AG04450 (cell line): ENCODE measurements at regions of chr19 and their contacts with region 1.

Region 1: DNA sequence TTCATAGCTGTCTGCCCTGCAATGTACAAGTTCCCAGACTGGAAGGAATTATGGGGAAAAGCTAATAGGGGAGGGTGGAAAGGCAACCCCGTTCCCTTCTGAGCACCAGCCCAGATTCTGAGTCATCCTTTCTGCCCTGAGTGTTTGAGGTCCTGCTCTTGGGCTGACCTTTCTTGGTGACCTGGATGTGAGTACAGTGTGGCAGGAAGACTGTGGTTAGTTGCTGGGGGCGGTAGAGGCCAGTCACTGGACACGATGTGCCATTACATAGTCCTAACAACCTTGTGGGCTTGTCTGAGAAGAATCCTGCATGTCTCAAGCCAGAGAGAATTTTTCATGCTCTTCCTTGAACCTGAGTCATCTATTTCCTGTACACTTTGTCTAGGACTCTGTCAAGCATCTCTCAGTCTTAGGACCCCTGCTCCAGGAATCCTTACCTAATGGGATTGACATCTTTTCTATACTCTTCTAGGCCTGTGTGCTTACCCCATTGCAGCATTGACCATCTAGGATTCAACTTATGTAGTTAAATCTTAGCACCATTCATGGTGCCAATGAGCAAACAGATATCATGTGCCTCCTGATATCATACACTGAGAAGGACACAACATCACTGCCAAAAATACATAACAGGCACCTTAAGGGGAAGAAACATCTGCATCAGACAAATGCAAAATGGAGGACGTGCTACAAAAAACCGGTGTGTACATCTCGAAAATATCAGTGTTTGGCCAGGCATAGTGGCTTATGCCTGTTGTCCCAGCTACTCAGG is 8.1 kb upstream of the ANGPTL4 start:
- DNase-seq: no peak
- H3K4me3 ChIP-seq: no peak overlapping the region
- H3K27ac ChIP-seq: peak overlapping the region; percentile 34
- H3K27me3 ChIP-seq: no peaks in the 10 kb centered on the region
- CTCF ChIP-seq: no peak

Region 2: GRCh38 chr19:8041531-8041931 is 314.3 kb before region 1 on chr19:
- CTCF ChIA-PET with region 1: no interaction called
- POLR2A ChIA-PET with region 1: no interaction called
- DNase-seq: no peak
- H3K4me3 ChIP-seq: no peak overlapping the region
- H3K27ac ChIP-seq: no peak overlapping the region
- H3K27me3 ChIP-seq: peaks cover 6% of the 10 kb centered on the region
- CTCF ChIP-seq: no peak

Region 3: GRCh38 chr19:8310342-8311255 is 45.2 kb before region 1 on chr19:
- CTCF ChIA-PET with region 1: interaction called, 11 read pairs
- POLR2A ChIA-PET with region 1: no interaction called
- DNase-seq: no peak
- H3K4me3 ChIP-seq: no peak overlapping the region
- H3K27ac ChIP-seq: no peak overlapping the region
- H3K27me3 ChIP-seq: no peaks in the 10 kb centered on the region
- CTCF ChIP-seq: no peak

Region 4: DNA sequence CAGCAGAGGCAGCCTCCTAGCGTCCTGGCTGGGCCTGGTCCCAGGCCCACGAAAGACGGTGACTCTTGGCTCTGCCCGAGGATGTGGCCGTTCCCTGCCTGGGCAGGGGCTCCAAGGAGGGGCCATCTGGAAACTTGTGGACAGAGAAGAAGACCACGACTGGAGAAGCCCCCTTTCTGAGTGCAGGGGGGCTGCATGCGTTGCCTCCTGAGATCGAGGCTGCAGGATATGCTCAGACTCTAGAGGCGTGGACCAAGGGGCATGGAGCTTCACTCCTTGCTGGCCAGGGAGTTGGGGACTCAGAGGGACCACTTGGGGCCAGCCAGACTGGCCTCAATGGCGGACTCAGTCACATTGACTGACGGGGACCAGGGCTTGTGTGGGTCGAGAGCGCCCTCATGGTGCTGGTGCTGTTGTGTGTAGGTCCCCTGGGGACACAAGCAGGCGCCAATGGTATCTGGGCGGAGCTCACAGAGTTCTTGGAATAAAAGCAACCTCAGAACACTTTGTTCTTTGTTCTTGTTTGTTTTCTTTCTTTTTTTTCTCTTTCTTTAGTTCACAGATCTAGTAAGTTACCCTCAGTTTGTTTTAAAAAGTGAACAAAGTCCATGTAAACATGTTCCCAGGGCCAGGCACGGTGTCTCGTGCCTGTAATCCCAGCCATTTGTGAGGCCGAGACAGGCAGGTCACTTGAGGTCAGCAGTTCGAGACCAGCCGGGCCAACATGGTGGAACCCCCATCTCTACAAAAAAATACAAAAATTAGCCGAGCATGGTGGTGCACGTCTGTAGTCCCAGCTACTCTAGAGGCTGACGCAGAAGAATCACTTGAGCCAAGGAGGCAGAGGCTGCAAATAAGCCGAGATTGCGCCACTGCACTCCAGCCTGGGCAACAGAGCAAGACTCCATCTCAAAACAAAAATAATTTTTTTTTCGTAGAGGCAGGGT is 18.3 kb after region 1 on chr19:
- CTCF ChIA-PET with region 1: interaction called, 12 read pairs
- POLR2A ChIA-PET with region 1: no interaction called
- DNase-seq: no peak
- H3K4me3 ChIP-seq: no peak overlapping the region
- H3K27ac ChIP-seq: no peak overlapping the region
- H3K27me3 ChIP-seq: no peaks in the 10 kb centered on the region
- CTCF ChIP-seq: no peak

Region 5: DNA sequence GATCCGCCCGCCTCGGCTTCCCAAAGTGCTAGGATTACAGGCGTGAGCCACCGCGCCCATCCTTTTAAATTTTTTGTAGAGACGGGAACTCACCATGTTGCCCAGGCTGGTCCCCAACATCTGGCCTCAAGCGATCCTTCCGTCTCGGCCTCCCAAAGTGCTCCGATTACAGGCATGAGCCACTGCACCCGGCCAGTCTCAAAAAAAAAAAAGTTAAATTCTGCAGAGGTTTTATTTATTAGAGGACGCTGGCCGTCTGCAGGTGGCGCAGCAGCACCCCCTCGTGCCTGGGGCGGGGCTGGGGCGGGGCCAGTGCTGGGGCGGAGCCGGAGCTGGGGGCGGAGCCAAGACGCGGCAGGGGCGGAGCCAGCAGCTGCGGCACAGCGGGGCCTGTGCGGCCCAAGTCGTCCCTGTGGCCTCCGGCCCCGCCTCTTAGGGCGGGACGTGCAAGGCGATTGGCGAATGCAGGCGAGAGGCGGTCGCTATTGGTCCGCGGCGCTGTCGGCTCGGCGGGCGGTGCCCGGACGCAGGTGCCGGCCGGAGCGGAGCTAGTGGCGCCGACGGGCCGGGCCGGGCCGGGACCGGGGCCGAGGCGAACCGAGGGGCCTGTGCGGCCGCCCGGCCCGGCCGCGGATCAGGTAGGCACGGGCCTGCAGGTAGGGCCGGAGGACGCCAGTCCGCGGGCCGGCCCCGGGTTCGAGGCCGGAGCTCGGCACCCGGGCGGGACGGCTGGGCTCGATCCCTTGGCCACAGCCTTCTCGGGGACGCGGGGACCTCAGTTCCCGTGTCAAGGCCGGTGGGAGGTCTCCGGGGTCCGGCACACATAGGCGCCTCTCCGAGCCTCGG is 57.2 kb after region 1 on chr19 and contains the start of gene MARCHF2:
- CTCF ChIA-PET with region 1: interaction called, 21 read pairs
- POLR2A ChIA-PET with region 1: no interaction called
- DNase-seq: peak; percentile 94
- H3K4me3 ChIP-seq: peak within 1 kb of the TSS; percentile 68
- H3K27ac ChIP-seq: no peak within 1 kb of the TSS
- H3K27me3 ChIP-seq: no peaks in the 10 kb centered on the region
- CTCF ChIP-seq: peak; percentile 62
- polyA plus RNA-seq, gene MARCHF2: 14.7 and 20.0 TPM in 2 replicates

Region 6: GRCh38 chr19:8444645-8445487 is 89.0 kb after region 1 on chr19 and contains the start of gene HNRNPM:
- CTCF ChIA-PET with region 1: interaction called, 15 read pairs
- POLR2A ChIA-PET with region 1: no interaction called
- DNase-seq: peak; percentile 89
- H3K4me3 ChIP-seq: peak within 1 kb of the TSS; percentile 87
- H3K27ac ChIP-seq: peak within 1 kb of the TSS; percentile 68
- H3K27me3 ChIP-seq: no peaks in the 10 kb centered on the region
- CTCF ChIP-seq: no peak
- polyA plus RNA-seq, gene HNRNPM: 99.6 and 122 TPM in 2 replicates

Region 7: GRCh38 chr19:8505680-8506401 is 150.0 kb after region 1 on chr19:
- CTCF ChIA-PET with region 1: interaction called, 22 read pairs
- POLR2A ChIA-PET with region 1: no interaction called
- DNase-seq: peak; percentile 18
- H3K4me3 ChIP-seq: peak overlapping the region; percentile 61
- H3K27ac ChIP-seq: no peak overlapping the region
- H3K27me3 ChIP-seq: no peaks in the 10 kb centered on the region
- CTCF ChIP-seq: peak; percentile 92